Endothelial cell of umbilical vein (primary cell): ENCODE measurements at regions of chr6 and their contacts with region 1.

Region 1: DNA sequence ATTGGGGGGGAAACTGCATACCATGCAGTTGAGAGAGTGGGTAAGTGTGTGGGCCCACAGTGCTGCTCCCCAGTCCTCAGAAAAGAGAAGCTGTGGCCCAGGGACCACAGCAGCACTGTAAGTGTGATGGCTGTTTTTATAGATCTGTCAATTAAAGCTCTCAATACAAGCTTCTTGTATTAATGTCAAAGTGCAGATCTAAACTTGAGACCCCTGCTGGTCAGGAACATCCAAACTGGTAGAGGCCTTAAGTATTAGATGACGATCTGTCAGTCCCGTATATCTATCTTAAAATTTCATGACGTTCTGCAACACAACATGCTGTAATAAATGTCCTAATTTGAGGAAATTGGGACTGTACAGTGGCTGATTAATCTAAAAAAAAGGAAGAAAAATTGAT is 74.8 kb downstream of the TULP4 start:
- DNase-seq: no peak
- H3K4me3 ChIP-seq: no peak overlapping the region
- H3K27ac ChIP-seq: no peak overlapping the region
- H3K4me1 ChIP-seq: no peaks in the 10 kb centered on the region
- H3K27me3 ChIP-seq: no peaks in the 10 kb centered on the region
- CTCF ChIP-seq: peak in 1 of 2 donors; percentile 17
- POLR2A ChIP-seq: no peak

Region 2: DNA sequence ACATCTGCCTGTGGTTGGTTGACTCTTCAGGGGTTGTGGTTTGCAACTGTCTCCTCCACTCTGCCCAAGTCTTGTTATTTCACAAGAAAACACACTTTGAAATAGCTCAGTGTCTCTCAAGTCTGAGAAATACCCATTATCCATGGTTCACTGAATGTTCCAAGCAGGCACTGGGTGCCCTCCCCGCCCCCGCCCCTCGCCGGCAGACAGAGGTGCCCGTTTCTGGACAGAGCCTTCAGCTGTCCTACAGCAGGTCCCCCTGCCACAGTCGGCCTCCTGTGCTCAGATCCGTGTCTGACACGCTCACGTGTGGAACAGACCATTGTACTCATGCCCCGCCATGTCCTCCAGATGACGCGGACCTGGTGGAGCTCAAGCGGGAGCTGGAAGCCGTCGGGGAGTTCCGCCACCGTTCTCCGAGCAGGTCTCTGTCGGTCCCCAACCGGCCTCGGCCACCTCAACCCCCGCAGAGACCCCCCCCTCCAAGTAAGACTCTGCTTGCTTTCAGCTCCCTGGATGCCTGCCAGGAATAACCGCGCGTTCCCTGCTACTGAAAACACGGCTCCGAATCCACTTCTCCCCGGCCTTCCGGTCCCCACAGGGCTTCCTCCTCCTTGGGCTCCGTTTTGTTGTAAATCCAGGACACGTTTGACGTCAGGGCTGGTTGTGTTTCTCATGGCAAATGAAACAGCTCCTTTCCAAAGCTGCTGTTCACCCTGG is 300.4 kb before region 1 on chr6:
- CTCF ChIA-PET with region 1: no interaction called
- POLR2A ChIA-PET with region 1: no interaction called
- dilution Hi-C with region 1: no loop called
- intact Hi-C with region 1: no loop called
- DNase-seq: no peak
- H3K4me3 ChIP-seq: no peak overlapping the region
- H3K27ac ChIP-seq: no peak overlapping the region
- H3K4me1 ChIP-seq: peaks cover 6% of the 10 kb centered on the region
- H3K27me3 ChIP-seq: no peaks in the 10 kb centered on the region
- CTCF ChIP-seq: no peak
- POLR2A ChIP-seq: no peak

Region 3: GRCh38 chr6:158399040-158399700 is 12.1 kb after region 1 on chr6:
- CTCF ChIA-PET with region 1: interaction called, 14 read pairs
- POLR2A ChIA-PET with region 1: no interaction called
- dilution Hi-C with region 1: no loop called
- intact Hi-C with region 1: no loop called
- DNase-seq: peak; percentile 92
- H3K4me3 ChIP-seq: no peak overlapping the region
- H3K27ac ChIP-seq: no peak overlapping the region
- H3K4me1 ChIP-seq: peaks cover 27% of the 10 kb centered on the region
- H3K27me3 ChIP-seq: no peaks in the 10 kb centered on the region
- CTCF ChIP-seq: no peak
- POLR2A ChIP-seq: peak; percentile 59

Region 4: DNA sequence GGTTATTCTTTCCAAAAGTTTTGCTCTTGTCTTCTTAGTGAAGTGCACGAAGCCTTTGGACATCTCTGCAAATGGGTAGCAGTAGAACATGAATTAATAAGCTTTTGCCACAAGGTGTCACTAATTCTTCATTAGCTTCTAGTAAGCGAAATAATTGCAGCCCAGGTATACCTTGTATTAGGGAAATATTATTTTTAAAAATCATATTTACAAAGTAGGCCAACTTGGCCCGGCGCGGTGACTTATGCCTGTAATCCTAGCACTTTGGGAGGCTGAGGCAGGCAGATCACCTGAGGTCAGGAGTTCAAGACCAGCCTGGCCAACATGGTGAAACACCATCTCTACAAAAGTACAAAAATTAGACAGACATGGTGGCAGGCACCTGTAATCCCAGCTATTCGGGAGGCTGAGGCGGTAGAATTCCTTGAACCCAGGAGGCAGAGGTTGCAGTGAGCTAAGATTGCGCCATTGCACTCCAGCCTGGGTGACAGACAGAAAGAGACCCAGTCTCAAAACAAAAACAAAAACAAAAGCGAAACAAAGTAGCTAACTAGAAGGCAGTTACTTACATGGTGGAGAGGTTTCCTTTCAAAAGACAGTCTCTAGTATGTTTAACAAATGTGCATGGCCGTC is 621.7 kb after region 1 on chr6:
- CTCF ChIA-PET with region 1: no interaction called
- POLR2A ChIA-PET with region 1: no interaction called
- dilution Hi-C with region 1: no loop called
- intact Hi-C with region 1: no loop called
- DNase-seq: peak; percentile 30
- H3K4me3 ChIP-seq: no peak overlapping the region
- H3K27ac ChIP-seq: no peak overlapping the region
- H3K4me1 ChIP-seq: no peaks in the 10 kb centered on the region
- H3K27me3 ChIP-seq: no peaks in the 10 kb centered on the region
- CTCF ChIP-seq: peak; percentile 14 to 21
- POLR2A ChIP-seq: no peak